Naive thymus-derived CD4-positive, alpha-beta T cell (primary cell): ENCODE measurements at regions of chr22 and their contacts with region 1.

Region 1: DNA sequence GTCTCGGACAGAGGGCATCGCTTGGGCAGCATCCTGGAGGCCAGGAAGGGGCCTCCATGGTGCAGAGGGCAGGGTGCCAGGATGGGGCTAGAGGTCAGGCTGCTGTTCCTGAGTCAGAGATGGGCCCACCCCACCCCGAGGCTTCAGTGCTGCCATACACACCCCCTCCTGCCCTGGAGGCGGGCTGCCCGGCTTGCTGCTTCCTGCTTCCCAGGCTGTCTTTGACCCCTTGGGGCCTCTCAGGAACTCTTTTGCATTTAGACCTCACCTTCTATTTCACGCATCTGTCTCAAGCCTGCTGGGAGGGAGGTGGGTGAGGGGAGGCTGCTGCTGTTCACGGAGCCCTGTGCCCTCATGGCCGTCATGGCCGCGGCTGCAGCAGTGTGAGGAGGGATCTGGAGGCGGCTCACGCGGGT is 6.6 kb upstream of the GRAMD4 start:
- DNase-seq: peak in 1 of 9 donors; percentile 33
- ATAC-seq: no peak
- H3K4me3 ChIP-seq: peak overlapping the region; percentile 71
- H3K4me3 Mint-ChIP-seq: peak overlapping the region; percentile 88 to 96 (median 92)
- H3K27ac ChIP-seq: no peak overlapping the region
- H3K27ac Mint-ChIP-seq: peak overlapping the region; percentile 72 to 95 (median 85)
- H3K4me1 ChIP-seq: peaks cover 23 to 24% of the 10 kb centered on the region in 2 donors
- H3K4me1 Mint-ChIP-seq: peaks cover 22 to 39% (median 29%) of the 10 kb centered on the region in 7 donors
- H3K27me3 ChIP-seq: no peaks in the 10 kb centered on the region
- H3K27me3 Mint-ChIP-seq: no peaks in the 10 kb centered on the region

Region 2: GRCh38 chr22:46484861-46485595 is 128.6 kb before region 1 on chr22:
- CTCF ChIA-PET with region 1: no interaction called
- POLR2A ChIA-PET with region 1: no interaction called
- intact Hi-C with region 1: no loop called
- DNase-seq: no peak
- ATAC-seq: no peak
- H3K4me3 ChIP-seq: no peak overlapping the region
- H3K4me3 Mint-ChIP-seq: no peak overlapping the region
- H3K27ac ChIP-seq: no peak overlapping the region
- H3K27ac Mint-ChIP-seq: no peak overlapping the region
- H3K4me1 ChIP-seq: no peaks in the 10 kb centered on the region
- H3K4me1 Mint-ChIP-seq: peaks cover 4 to 12% (median 8%) of the 10 kb centered on the region in 7 donors
- H3K27me3 ChIP-seq: no peaks in the 10 kb centered on the region
- H3K27me3 Mint-ChIP-seq: peaks cover 0 to 9% (median 5%) of the 10 kb centered on the region in 5 donors

Region 3: DNA sequence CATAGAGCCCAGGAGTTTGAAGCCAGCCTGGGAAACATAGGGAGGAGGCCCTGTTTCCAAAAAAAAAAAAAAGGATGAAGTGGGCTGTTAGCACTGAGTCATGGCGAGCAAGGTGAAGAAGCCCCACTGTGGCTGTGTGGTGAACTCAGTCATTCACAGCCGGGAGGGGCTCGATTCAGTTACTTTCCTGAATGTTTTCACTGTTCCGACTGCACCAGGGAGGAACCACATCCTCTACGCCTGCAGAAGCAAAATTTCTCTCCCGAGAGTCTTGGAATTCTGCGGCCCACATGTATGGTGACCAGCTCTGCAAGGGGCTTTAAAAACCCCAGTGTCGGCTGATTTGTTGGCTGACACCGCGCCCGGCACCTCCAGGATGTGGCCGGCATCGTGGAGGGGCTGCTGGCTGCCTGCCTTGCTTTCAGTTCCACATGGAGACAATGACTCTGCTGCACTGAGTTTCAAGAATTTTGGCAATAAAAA is 21.2 kb before region 1 on chr22:
- CTCF ChIA-PET with region 1: interaction called, 3 read pairs
- POLR2A ChIA-PET with region 1: interaction called, 4 read pairs
- intact Hi-C with region 1: loop called (anchors 1 to 2 kb)
- DNase-seq: peak in 5 of 9 donors; percentile 38 to 59 (median 40)
- ATAC-seq: peak; percentile 49
- H3K4me3 ChIP-seq: no peak overlapping the region
- H3K4me3 Mint-ChIP-seq: peak overlapping the region; percentile 39 to 86 (median 77)
- H3K27ac ChIP-seq: no peak overlapping the region
- H3K27ac Mint-ChIP-seq: peak overlapping the region in 7 of 9 donors; percentile 22 to 89 (median 58)
- H3K4me1 ChIP-seq: peaks cover 14 to 15% of the 10 kb centered on the region in 2 donors
- H3K4me1 Mint-ChIP-seq: peaks cover 3 to 39% (median 21%) of the 10 kb centered on the region in 7 donors
- H3K27me3 ChIP-seq: no peaks in the 10 kb centered on the region
- H3K27me3 Mint-ChIP-seq: no peaks in the 10 kb centered on the region

Region 4: GRCh38 chr22:46714550-46714949 is 100.9 kb after region 1 on chr22:
- CTCF ChIA-PET with region 1: no interaction called
- POLR2A ChIA-PET with region 1: no interaction called
- intact Hi-C with region 1: no loop called
- DNase-seq: no peak
- ATAC-seq: no peak
- H3K4me3 ChIP-seq: no peak overlapping the region
- H3K4me3 Mint-ChIP-seq: no peak overlapping the region
- H3K27ac ChIP-seq: peak overlapping the region; percentile 27
- H3K27ac Mint-ChIP-seq: peak overlapping the region in 6 of 9 donors; percentile 10 to 79 (median 50)
- H3K4me1 ChIP-seq: no peaks in the 10 kb centered on the region
- H3K4me1 Mint-ChIP-seq: peaks cover 5 to 17% (median 9%) of the 10 kb centered on the region in 7 donors
- H3K27me3 ChIP-seq: no peaks in the 10 kb centered on the region
- H3K27me3 Mint-ChIP-seq: no peaks in the 10 kb centered on the region

Region 5: DNA sequence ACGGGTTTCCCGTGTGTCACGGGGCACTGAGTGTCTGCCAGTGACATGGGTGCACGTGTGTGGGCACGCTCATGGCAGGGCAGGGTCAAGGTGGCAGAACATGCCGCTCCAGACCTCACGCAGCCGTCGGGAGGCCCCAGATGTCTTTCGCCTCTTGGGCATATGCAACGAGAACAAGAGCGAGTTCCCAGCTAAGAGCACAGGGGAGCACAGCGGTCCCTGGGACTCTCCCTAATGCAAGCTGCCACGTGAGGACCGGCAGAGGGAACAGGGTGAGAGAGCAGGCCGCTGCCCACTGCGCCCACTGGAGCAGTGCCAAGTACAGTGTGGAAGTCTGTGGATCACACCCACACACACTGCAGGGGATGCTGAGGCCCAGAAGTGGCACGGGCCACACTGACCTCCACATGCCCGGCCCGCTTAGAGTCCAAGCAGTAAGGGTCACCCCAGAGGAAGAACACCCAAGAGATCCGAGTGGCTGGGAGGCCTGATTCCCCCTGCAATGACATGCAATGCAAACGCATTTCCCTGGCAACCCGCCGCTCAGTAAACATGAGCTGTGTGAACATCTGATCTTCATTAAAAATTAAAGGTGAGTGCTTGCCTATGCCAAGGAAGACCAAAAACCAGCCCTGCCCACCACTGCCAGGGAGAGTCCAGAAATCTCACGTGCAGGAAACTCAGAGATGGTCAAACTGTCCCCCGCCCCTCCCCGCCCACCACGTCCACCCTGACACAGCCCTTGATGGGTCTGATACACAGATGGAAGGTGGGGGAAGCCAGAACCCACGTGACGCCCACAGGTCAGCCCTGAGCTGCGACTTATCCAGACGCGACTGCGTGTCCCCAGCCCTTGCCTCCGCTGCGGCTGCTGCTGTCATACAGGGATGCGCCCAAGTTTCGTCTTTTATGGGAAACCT is 112.7 kb after region 1 on chr22:
- CTCF ChIA-PET with region 1: no interaction called
- POLR2A ChIA-PET with region 1: no interaction called
- intact Hi-C with region 1: no loop called
- DNase-seq: no peak
- ATAC-seq: no peak
- H3K4me3 ChIP-seq: no peak overlapping the region
- H3K4me3 Mint-ChIP-seq: no peak overlapping the region
- H3K27ac ChIP-seq: no peak overlapping the region
- H3K27ac Mint-ChIP-seq: peak overlapping the region in 2 of 9 donors; percentile 53 to 78
- H3K4me1 ChIP-seq: peaks cover 10 to 11% of the 10 kb centered on the region in 2 donors
- H3K4me1 Mint-ChIP-seq: peaks cover 14 to 58% (median 37%) of the 10 kb centered on the region in 7 donors
- H3K27me3 ChIP-seq: no peaks in the 10 kb centered on the region
- H3K27me3 Mint-ChIP-seq: no peaks in the 10 kb centered on the region